HepG2 (cell line): ENCODE measurements at regions of chr11 and their contacts with region 1.

Region 1: GRCh38 chr11:31107062-31107461 is 262.5 kb downstream of the DCDC1 start:
- DNase-seq: peak; percentile 50
- ATAC-seq: peak; percentile 89
- H3K4me3 ChIP-seq: no peak overlapping the region
- H3K27ac ChIP-seq: no peak overlapping the region
- H3K4me1 ChIP-seq: no peaks in the 10 kb centered on the region
- H3K27me3 ChIP-seq: no peaks in the 10 kb centered on the region; a peak in 1 of 5 replicates
- CTCF ChIP-seq: peak; percentile 78
- EP300 ChIP-seq: no peak
- POLR2A ChIP-seq: no peak
- RAD21 ChIP-seq: 0 out of 2 replicates have a peak, but pooled peaks have one; percentile 19

Region 2: DNA sequence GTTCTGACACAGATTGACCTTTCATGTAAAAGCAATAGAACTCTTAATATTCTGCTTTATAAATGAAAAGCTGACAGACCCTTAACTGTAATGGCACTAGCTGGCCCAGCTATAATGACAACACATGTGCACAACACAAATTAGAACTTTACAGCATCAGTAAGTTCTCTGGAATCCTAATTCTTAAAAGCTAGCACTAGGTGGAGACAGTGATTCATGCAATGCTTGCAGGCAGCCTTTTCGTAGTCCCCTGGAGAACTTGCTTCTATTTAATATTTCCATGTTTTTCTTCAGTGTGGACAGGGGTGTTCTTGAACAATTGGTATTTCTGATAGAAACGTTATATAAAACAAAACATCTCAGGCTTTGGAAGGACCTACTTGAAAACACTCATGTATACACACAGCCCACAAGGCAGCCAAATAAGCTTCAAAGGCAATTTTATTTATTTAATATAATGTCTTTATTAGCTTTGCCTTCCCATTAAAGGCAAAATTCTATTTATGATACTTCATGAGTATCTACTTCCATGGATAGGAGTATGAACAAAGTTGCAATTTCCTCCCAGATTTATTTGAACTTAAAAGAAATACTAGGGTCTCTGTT is 146.6 kb before region 1 on chr11:
- CTCF ChIA-PET with region 1: no interaction called
- POLR2A ChIA-PET with region 1: no interaction called
- in situ Hi-C with region 1: no loop called
- intact Hi-C with region 1: loop called (anchors 5 kb)
- DNase-seq: peak; percentile 44
- ATAC-seq: peak; percentile 82
- H3K4me3 ChIP-seq: no peak overlapping the region
- H3K27ac ChIP-seq: no peak overlapping the region
- H3K4me1 ChIP-seq: no peaks in the 10 kb centered on the region
- H3K27me3 ChIP-seq: no peaks in the 10 kb centered on the region
- CTCF ChIP-seq: peak; percentile 78
- EP300 ChIP-seq: no peak
- POLR2A ChIP-seq: no peak
- RAD21 ChIP-seq: peak; percentile 70

Region 3: GRCh38 chr11:31001427-31001826 is 105.6 kb before region 1 on chr11:
- CTCF ChIA-PET with region 1: no interaction called
- POLR2A ChIA-PET with region 1: no interaction called
- in situ Hi-C with region 1: no loop called
- intact Hi-C with region 1: no loop called
- DNase-seq: no peak
- ATAC-seq: no peak
- H3K4me3 ChIP-seq: no peak overlapping the region
- H3K27ac ChIP-seq: no peak overlapping the region
- H3K4me1 ChIP-seq: no peaks in the 10 kb centered on the region
- H3K27me3 ChIP-seq: peaks cover 0 to 6% of the 10 kb centered on the region in 2 experiments; a peak in 1 of 5 replicates
- CTCF ChIP-seq: no peak
- EP300 ChIP-seq: no peak
- POLR2A ChIP-seq: no peak
- RAD21 ChIP-seq: no peak

Region 4: DNA sequence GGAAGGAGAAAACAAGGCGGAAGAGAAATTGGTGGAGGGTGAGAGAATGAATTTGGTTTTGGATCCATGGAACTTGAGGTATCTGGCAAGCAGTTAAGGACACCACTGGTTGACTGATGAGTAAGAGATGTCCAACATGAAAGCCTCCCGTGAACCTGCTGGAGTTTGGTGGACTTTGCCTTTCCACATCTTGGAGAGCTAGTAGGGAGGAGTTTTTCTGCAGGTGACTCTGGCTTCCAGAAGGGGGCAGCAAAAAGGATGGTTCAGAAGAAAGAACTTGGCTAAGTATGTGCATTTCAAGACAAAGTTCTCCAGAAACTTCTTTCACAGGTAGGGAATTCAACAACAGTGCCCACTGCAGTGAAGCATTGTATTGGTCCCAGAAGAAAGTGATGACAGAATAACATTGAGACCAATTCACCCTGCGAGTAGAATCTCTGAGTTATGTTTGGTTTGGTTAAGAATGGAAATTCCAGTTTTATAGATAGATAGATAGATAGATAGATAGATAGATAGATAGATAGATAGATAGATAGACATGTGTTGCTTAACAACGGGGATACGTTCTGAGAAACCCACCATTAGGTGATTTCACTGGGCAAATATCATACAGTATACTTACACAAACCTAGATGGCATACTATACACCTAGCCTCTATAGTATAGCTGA is 234.0 kb after region 1 on chr11:
- CTCF ChIA-PET with region 1: no interaction called
- POLR2A ChIA-PET with region 1: no interaction called
- in situ Hi-C with region 1: no loop called
- intact Hi-C with region 1: loop called (anchors 10 kb)
- DNase-seq: peak; percentile 45
- ATAC-seq: peak; percentile 88
- H3K4me3 ChIP-seq: no peak overlapping the region
- H3K27ac ChIP-seq: no peak overlapping the region
- H3K4me1 ChIP-seq: no peaks in the 10 kb centered on the region
- H3K27me3 ChIP-seq: no peaks in the 10 kb centered on the region
- CTCF ChIP-seq: peak; percentile 51
- EP300 ChIP-seq: no peak
- POLR2A ChIP-seq: no peak
- RAD21 ChIP-seq: no peak

Region 5: DNA sequence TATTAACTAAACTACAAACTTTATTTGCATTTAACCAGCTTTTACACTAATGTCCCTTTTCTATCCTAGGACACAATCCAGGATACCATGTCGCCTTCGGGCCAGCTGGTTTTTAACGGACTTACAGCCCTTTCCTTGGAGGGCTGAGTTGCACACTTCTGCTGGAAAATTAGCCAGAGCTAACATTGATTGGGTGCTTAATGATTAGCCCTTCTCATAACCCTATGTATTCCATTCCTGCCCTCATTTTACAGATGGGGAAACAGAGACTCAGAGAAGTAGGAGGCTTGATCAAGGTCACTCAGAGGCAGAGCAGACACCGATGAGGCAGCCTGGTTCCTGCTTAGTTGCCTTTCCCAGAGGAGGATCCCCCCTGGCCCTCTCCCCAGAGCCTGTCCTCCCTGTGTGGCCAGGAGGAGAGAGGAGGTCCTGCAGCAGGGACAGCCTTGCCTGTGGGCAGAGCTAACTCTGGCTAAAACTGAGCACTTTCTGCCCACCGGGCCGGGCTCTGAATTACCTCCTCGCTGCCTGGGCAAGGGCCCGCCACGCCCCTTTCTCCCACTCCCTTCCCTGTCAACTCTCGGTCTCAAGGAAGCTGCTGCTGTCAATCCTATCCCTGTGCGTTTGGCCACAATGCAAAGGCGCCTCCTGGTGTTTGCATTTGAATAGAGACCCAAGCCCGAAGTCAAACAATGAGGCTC is 763.7 kb after region 1 on chr11:
- CTCF ChIA-PET with region 1: no interaction called
- POLR2A ChIA-PET with region 1: no interaction called
- in situ Hi-C with region 1: no loop called
- intact Hi-C with region 1: loop called (anchors 2 kb)
- DNase-seq: peak; percentile 43
- ATAC-seq: peak; percentile 93
- H3K4me3 ChIP-seq: peak overlapping the region in 1 of 3 experiments; percentile 21; a peak in 1 of 6 replicates
- H3K27ac ChIP-seq: no peak overlapping the region
- H3K4me1 ChIP-seq: peaks cover 4% of the 10 kb centered on the region; the same call in 1 of the 2 replicates
- H3K27me3 ChIP-seq: peaks cover 0 to 23% of the 10 kb centered on the region in 2 experiments; a peak in 1 of 5 replicates
- CTCF ChIP-seq: peak; percentile 85
- EP300 ChIP-seq: no peak
- POLR2A ChIP-seq: no peak
- RAD21 ChIP-seq: peak; percentile 77

Region 6: GRCh38 chr11:32006799-32007388 is 899.8 kb after region 1 on chr11:
- CTCF ChIA-PET with region 1: no interaction called
- POLR2A ChIA-PET with region 1: no interaction called
- in situ Hi-C with region 1: no loop called
- intact Hi-C with region 1: loop called (anchors 2 kb)
- DNase-seq: peak; percentile 13
- ATAC-seq: peak; percentile 70
- H3K4me3 ChIP-seq: no peak overlapping the region
- H3K27ac ChIP-seq: no peak overlapping the region
- H3K4me1 ChIP-seq: no peaks in the 10 kb centered on the region
- H3K27me3 ChIP-seq: peaks cover 0 to 12% of the 10 kb centered on the region in 2 experiments; a peak in 2 of 5 replicates
- CTCF ChIP-seq: peak; percentile 72
- EP300 ChIP-seq: no peak
- POLR2A ChIP-seq: no peak
- RAD21 ChIP-seq: no peak